ENCODE measurements at regions of chr10 and their contacts with region 1.

Region 1: DNA sequence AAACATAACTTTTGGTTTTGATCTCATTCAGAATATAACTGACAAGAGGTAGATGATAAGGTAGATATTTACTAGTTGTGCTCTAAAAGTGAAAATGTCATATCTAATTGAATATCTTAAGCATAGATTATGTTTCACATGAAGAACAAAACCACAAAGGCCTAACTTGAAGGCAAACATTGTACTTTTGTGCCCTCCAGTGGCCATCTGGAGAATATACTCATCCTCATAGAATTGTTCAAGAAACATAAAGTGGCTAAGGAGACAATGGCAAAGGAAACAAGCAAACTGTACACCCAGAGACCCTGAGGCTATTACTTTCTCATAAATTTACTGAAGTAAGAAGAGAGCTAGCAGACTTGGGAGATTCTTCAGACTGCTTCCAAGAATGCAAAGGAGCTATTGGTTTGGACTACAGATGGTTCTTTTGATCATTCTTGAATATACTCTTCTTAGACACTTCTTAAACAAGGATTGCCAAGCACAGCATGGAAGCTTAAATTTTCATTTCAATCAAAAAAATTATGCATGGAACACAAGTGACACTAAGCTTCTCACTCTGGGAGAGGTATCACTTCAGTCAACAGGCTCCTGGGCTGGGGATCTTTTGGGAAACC is 98.2 kb upstream of the DKK1 start:
- DNase-seq: peak; percentile 65
- ATAC-seq: peak; percentile 71
- H3K4me3 ChIP-seq: no peak overlapping the region
- H3K27ac ChIP-seq: no peak overlapping the region
- H3K4me1 ChIP-seq: peaks cover 19% of the 10 kb centered on the region
- H3K27me3 ChIP-seq: no peaks in the 10 kb centered on the region
- CTCF ChIP-seq: peak; percentile 89
- EP300 ChIP-seq: no peak
- POLR2A ChIP-seq: no peak
- RAD21 ChIP-seq: peak; percentile 63; the same call in 1 of the 2 replicates

Region 2: GRCh38 chr10:51010977-51011376 is 1204.9 kb before region 1 on chr10:
- CTCF ChIA-PET with region 1: no interaction called
- POLR2A ChIA-PET with region 1: no interaction called
- in situ Hi-C with region 1: loop called (anchors 25 kb)
- intact Hi-C with region 1: no loop called
- DNase-seq: peak; percentile 27
- ATAC-seq: peak; percentile 64; the same call in 2 of the 3 replicates
- H3K4me3 ChIP-seq: no peak overlapping the region
- H3K27ac ChIP-seq: no peak overlapping the region
- H3K4me1 ChIP-seq: no peaks in the 10 kb centered on the region
- H3K27me3 ChIP-seq: peaks cover 0 to under 1% of the 10 kb centered on the region in 2 experiments; a peak in 2 of 5 replicates
- CTCF ChIP-seq: peak; percentile 66
- EP300 ChIP-seq: no peak
- POLR2A ChIP-seq: no peak
- RAD21 ChIP-seq: no peak

Region 3: DNA sequence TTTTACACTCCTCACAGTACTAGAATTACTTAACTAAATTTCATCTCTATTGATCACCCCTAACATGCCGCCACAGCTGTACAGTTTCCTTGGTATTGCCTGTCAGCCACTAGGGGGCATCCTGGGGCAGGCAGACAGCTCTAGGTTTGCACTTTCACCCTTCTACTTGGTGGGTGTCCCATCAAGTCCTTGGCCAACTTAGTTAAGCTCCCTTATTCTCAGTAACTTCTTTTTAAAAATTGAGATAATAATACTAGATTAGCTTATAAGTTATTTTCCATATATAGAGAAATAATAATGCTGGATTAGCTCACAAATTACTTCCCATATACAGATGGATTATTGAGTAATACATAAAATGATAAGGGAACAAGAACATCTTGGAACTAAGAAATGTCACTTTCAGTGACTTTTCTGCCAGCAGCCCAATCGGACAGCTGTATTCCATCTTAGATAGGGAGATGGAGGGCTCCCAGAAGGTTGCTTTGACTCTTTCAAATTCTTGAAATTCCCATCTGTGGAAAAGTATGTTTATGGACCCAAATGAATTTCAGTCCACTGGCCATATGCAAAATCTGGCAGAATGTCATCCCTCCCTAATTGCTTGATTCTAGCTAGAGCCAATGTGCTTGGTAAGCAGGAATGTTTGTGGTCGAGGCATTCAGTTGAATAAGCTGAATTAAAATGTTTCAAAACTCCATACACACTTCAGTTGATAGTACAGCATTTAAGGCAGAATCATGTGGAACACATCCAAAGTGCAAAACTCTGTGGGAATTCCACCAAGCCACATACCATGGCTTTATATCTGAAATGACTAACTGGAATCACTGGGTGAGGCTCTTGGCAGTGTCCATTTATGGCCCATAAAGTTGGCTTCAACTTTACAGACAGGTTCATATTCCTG is 826.2 kb before region 1 on chr10:
- CTCF ChIA-PET with region 1: interaction called, 3 read pairs
- POLR2A ChIA-PET with region 1: no interaction called
- in situ Hi-C with region 1: loop called (anchors 25 kb)
- intact Hi-C with region 1: loop called (anchors 1 kb)
- DNase-seq: peak; percentile 32
- ATAC-seq: peak; percentile 91
- H3K4me3 ChIP-seq: no peak overlapping the region
- H3K27ac ChIP-seq: no peak overlapping the region
- H3K4me1 ChIP-seq: no peaks in the 10 kb centered on the region
- H3K27me3 ChIP-seq: no peaks in the 10 kb centered on the region
- CTCF ChIP-seq: peak; percentile 77
- EP300 ChIP-seq: no peak
- POLR2A ChIP-seq: no peak
- RAD21 ChIP-seq: peak; percentile 57

Region 4: DNA sequence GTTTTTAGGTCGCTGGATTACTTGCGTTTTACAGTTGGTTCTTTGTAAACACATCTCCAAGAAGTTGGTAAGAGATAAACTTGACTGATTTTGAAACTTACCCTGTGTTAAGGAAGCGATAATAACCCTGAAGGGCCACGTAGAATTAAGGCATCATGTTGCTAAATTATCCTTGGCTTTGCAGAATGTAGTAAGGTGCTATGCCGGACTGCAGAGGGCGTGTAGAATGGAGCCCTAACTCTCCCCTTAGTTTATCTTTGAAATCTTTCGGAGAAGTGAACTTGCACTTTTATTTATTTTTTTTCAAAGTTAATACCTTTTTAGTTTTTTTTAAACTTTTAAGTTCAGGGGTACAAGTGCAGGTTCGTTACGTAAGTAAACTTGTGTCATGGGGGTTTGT is 110.6 kb before region 1 on chr10:
- CTCF ChIA-PET with region 1: no interaction called
- POLR2A ChIA-PET with region 1: no interaction called
- in situ Hi-C with region 1: no loop called
- intact Hi-C with region 1: loop called (anchors 1 kb)
- DNase-seq: no peak
- ATAC-seq: no peak
- H3K4me3 ChIP-seq: no peak overlapping the region
- H3K27ac ChIP-seq: no peak overlapping the region
- H3K4me1 ChIP-seq: no peaks in the 10 kb centered on the region; the same call in 1 of the 2 replicates
- H3K27me3 ChIP-seq: no peaks in the 10 kb centered on the region
- CTCF ChIP-seq: no peak
- EP300 ChIP-seq: no peak
- POLR2A ChIP-seq: no peak
- RAD21 ChIP-seq: no peak

Region 5: DNA sequence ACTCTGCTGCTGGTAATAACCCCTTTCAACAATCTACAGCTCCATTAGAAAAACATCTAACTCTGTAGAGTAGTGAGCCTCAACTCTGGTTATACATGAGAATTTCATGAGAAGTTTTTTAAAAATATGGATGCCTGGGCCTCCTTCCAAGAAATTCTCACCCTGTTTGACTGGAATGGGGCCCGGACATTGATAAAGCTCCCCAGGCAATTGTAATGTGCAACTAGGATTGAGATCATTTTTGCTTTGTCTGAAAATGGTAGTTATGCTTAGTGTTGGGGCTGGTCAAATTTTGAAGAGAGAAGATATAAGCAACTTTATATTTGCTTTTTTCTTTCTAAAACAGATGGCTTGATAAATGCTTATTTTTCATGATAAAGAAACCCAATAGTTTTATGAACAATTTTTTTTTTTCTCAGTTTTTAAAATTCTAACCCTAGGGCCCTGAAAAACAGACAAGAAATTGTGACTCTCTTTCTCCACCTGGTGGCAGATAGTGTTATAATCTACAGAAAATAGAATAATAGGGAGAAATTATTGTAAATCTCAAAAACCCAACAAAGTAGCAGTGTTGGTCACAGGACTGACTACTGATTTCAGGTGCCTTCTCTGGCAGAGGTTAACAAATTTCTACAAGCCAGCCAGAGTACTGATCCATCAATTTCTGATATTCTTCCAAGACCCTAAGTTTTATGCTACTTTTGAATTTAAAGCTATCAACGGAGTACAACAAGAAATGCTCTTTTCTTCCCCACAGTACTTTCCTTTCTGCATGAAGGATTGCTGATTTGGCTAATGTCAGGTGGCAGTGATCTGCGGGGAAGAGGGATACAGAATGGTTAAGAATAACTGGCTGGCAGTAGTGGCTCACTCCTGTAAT is 273.0 kb after region 1 on chr10:
- CTCF ChIA-PET with region 1: no interaction called
- POLR2A ChIA-PET with region 1: no interaction called
- in situ Hi-C with region 1: no loop called
- intact Hi-C with region 1: loop called (anchors 1 kb)
- DNase-seq: peak; percentile 46
- ATAC-seq: peak; percentile 54; the same call in 1 of the 3 replicates
- H3K4me3 ChIP-seq: no peak overlapping the region
- H3K27ac ChIP-seq: no peak overlapping the region
- H3K4me1 ChIP-seq: no peaks in the 10 kb centered on the region
- H3K27me3 ChIP-seq: no peaks in the 10 kb centered on the region; a peak in 1 of 5 replicates
- CTCF ChIP-seq: peak; percentile 59
- EP300 ChIP-seq: no peak
- POLR2A ChIP-seq: no peak
- RAD21 ChIP-seq: peak; percentile 29; the same call in 1 of the 2 replicates